ENCODE measurements at regions of chr17 and their contacts with region 1.

Region 1: DNA sequence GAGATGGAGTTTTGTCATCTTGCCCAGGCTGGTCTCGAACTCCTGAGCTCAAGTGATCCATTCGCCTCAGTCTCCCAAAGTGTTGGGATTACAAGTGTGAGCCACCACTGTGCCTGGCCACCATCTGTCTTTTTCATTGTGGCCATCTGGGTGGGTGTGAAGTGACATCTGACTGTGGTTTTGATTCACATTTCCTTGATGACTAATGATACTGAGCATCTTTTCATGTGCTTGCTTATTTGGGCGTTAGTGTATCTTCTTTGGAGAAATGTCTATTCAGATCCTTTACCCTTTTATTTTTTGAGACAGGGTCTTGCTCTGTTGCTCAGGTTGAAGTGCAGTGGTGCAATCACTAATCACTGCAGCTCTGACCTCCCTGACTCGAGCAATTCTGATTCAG is 53.9 kb upstream of the ERN1 start:
- DNase-seq: peak; percentile 65 to 81 (median 77)
- H3K4me3 ChIP-seq: no peak overlapping the region
- H3K4me3 Mint-ChIP-seq: no peak overlapping the region
- H3K27ac ChIP-seq: peak overlapping the region; percentile 47 to 70
- H3K27ac Mint-ChIP-seq: peak overlapping the region; percentile 79 to 97 (median 92)
- H3K4me1 ChIP-seq: peaks cover 75 to 81% of the 10 kb centered on the region in 2 donors
- H3K4me1 Mint-ChIP-seq: peaks cover 72% of the 10 kb centered on the region
- H3K27me3 ChIP-seq: no peaks in the 10 kb centered on the region
- H3K27me3 Mint-ChIP-seq: no peaks in the 10 kb centered on the region
- CTCF ChIP-seq: no peak

Region 2: GRCh38 chr17:64145757-64146417 is 37.9 kb before region 1 on chr17:
- intact Hi-C with region 1: loop called in 1 of 2 experiments (anchors 5 kb)
- DNase-seq: peak; percentile 97 to 100 (median 98)
- H3K4me3 ChIP-seq: peak overlapping the region; percentile 72 to 95 (median 93)
- H3K4me3 Mint-ChIP-seq: no peak overlapping the region
- H3K27ac ChIP-seq: peak overlapping the region; percentile 66 to 85
- H3K27ac Mint-ChIP-seq: no peak overlapping the region
- H3K4me1 ChIP-seq: peaks cover 25 to 28% of the 10 kb centered on the region in 2 donors
- H3K4me1 Mint-ChIP-seq: peaks cover 24% of the 10 kb centered on the region
- H3K27me3 ChIP-seq: no peaks in the 10 kb centered on the region
- H3K27me3 Mint-ChIP-seq: no peaks in the 10 kb centered on the region
- CTCF ChIP-seq: no peak

Region 3: DNA sequence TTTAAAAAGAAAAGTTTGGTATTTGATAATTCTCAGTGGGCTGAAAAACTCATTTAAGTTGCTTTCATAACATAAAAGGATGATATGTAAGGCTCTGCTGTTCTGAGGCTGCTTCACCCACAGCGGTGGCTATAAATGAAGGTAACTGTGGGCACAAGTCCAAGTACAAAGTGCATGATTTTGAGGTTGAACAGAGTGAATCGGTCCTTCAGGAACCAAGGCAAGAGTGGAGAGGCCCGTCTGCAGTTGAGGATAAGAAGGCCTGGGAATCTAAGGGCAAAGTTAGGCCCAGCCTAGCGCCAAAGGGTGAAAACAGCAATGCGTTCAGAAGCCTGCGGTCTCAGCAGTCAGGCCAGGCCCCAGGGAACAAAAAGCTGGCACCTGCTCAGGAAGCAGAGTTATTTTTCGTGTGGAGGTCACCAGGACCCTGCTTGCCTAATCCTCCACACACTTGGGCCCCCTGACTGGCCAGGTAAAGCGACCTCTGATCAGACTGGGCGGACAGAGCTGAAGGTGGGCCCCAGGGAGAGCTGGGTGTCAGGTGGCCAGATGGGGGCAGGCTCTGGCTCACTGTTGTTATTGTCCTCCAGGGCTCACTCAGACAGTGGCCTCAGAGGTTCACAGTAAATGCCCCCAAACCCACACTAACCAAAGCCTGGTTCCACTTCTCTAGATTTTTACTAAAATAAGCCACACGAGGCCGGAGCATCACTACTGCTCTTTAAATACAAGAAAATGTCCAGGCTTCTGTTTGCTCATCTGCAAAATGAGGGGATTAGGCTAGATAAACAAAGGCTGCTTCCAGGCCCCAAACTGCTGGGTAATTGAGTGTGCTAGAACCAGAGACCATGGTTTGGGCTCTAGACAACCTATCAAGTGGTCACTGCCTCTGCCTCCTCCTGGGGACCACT is 32.8 kb after region 1 on chr17:
- intact Hi-C with region 1: loop called in 1 of 2 experiments (anchors 5 kb)
- DNase-seq: no peak
- H3K4me3 ChIP-seq: no peak overlapping the region
- H3K4me3 Mint-ChIP-seq: no peak overlapping the region
- H3K27ac ChIP-seq: peak overlapping the region in 1 of 2 donors; percentile 39
- H3K27ac Mint-ChIP-seq: peak overlapping the region; percentile 23 to 91 (median 64)
- H3K4me1 ChIP-seq: peaks cover 19 to 34% of the 10 kb centered on the region in 2 donors
- H3K4me1 Mint-ChIP-seq: peaks cover 43% of the 10 kb centered on the region
- H3K27me3 ChIP-seq: no peaks in the 10 kb centered on the region
- H3K27me3 Mint-ChIP-seq: peaks cover 0 to 6% (median 0%) of the 10 kb centered on the region in 3 donors
- CTCF ChIP-seq: no peak